GM10248 (cell line): ENCODE measurements at regions of chr3 and their contacts with region 1.

Region 1: GRCh38 chr3:119613201-119613600 is 15.5 kb downstream of the PLA1A start:
- DNase-seq: no peak
- CTCF ChIP-seq: no peak

Region 2: DNA sequence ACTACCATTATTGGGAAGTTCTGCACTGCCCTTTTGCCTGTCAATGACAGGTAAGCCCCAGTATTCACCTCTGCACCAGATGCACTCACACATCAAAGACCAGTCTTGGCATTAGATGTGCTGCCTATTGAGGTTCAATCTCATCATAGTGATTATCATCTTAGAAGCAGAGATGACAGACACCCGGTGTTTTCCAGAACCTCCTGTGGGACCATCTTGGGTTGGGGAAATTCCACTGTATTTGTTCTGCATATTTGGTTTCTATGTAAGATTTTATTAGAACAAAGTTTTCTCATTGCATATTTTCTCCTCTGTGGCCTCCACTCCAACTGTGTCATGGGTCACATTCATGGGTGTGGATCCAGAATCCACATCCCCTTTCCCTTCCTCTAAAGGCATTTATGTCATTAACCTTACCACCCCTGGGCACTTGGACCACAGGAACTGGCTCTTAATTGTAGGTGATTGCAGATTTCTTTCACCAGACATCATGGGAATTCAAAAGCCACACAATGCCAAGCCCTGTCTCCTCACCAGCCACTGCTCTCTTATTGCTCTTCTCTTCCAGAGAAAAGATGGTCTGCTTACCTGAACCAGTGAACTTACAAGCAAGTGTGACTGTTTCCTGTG is 15.7 kb after region 1 on chr3:
- CTCF ChIA-PET with region 1: interaction called, 16 read pairs
- POLR2A ChIA-PET with region 1: interaction called, 3 read pairs
- DNase-seq: no peak
- CTCF ChIP-seq: no peak

Region 3: GRCh38 chr3:119880966-119881365 is 267.8 kb after region 1 on chr3:
- CTCF ChIA-PET with region 1: no interaction called
- POLR2A ChIA-PET with region 1: no interaction called
- DNase-seq: no peak
- CTCF ChIP-seq: no peak